ENCODE measurements at regions of chr11 and their contacts with region 1.

Region 1: GRCh38 chr11:71120490-71120896 is 131.9 kb downstream of the SHANK2 start:
- DNase-seq: peak; percentile 29
- H3K4me3 ChIP-seq: no peak overlapping the region
- H3K27ac ChIP-seq: no peak overlapping the region
- H3K4me1 ChIP-seq: no peaks in the 10 kb centered on the region
- H3K27me3 ChIP-seq: no peaks in the 10 kb centered on the region
- CTCF ChIP-seq: no peak

Region 2: GRCh38 chr11:71342951-71343827 is 222.7 kb after region 1 on chr11:
- intact Hi-C with region 1: loop called (anchors 5 kb)
- DNase-seq: peak; percentile 55
- H3K4me3 ChIP-seq: no peak overlapping the region
- H3K27ac ChIP-seq: no peak overlapping the region
- H3K4me1 ChIP-seq: no peaks in the 10 kb centered on the region
- H3K27me3 ChIP-seq: no peaks in the 10 kb centered on the region
- CTCF ChIP-seq: peak; percentile 49